Activated CD4-positive, alpha-beta T cell treated with anti-CD3 and anti-CD28 coated beads, Interleukin-2, amount 10 ng/mL, durations not matched to agents 7 days and 5 days (primary cell): ENCODE measurements at regions of chr22 and their contacts with region 1.

Region 1: GRCh38 chr22:39332441-39333064 is 13.1 kb upstream of the RPL3 start:
- DNase-seq: no peak
- H3K4me3 Mint-ChIP-seq: no peak overlapping the region
- H3K27ac Mint-ChIP-seq: no peak overlapping the region
- H3K4me1 Mint-ChIP-seq: peaks cover 15% of the 10 kb centered on the region
- H3K27me3 Mint-ChIP-seq: no peaks in the 10 kb centered on the region

Region 2: GRCh38 chr22:39343259-39344048 is 10.9 kb after region 1 on chr22:
- CTCF ChIA-PET with region 1: interaction called, 14 read pairs
- POLR2A ChIA-PET with region 1: interaction called, 14 read pairs
- DNase-seq: peak; percentile 70
- H3K4me3 Mint-ChIP-seq: no peak overlapping the region
- H3K27ac Mint-ChIP-seq: no peak overlapping the region
- H3K4me1 Mint-ChIP-seq: peaks cover 3% of the 10 kb centered on the region
- H3K27me3 Mint-ChIP-seq: peaks cover 19% of the 10 kb centered on the region

Region 3: GRCh38 chr22:39405346-39406085 is 73.0 kb after region 1 on chr22:
- CTCF ChIA-PET with region 1: no interaction called
- POLR2A ChIA-PET with region 1: no interaction called
- DNase-seq: no peak
- H3K4me3 Mint-ChIP-seq: no peak overlapping the region
- H3K27ac Mint-ChIP-seq: no peak overlapping the region
- H3K4me1 Mint-ChIP-seq: peaks cover 67% of the 10 kb centered on the region
- H3K27me3 Mint-ChIP-seq: no peaks in the 10 kb centered on the region